Natural killer cell (primary cell): ENCODE measurements at regions of chr14 and their contacts with region 1.

Region 1: DNA sequence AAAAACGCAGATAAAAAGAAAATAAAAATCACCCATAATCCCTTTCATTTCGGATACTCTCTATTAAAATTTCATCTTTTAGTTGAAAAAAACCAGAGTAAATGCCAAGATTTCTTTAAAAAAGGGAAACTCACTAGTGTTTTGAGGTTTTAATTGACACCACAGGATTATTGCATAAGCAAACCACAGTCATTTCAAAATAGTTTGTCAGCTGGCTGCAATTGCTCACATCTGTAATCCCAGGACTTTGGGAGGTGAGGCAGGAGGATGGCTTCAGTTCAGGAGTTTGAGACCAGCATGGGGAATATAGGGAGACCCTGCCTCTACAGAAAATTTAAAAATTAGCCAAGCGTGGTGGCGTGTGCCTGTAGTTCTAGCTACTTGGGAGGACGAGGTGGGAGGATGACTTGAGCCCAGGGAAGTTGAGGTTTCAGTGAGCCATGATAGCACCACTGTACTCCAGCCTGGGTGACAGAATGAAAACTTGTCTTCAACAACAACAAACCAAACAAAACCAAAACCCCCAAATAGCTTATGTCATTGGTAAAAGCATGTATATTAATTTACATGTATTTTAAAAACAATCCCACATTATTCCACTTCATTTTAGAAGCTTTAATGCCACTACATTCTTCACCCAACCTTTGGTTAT is 48.8 kb downstream of the SYNE2 start:
- DNase-seq: peak; percentile 29 to 31
- ATAC-seq: peak; percentile 46 to 63 (median 55)
- H3K4me3 ChIP-seq: no peak overlapping the region
- H3K4me3 Mint-ChIP-seq: peak overlapping the region; percentile 68
- H3K27ac ChIP-seq: peak overlapping the region; percentile 45
- H3K27ac Mint-ChIP-seq: peak overlapping the region; percentile 67 to 97
- H3K4me1 ChIP-seq: peaks cover 30% of the 10 kb centered on the region
- H3K4me1 Mint-ChIP-seq: peaks cover 72 to 76% of the 10 kb centered on the region in 2 donors
- H3K27me3 ChIP-seq: no peaks in the 10 kb centered on the region
- H3K27me3 Mint-ChIP-seq: no peaks in the 10 kb centered on the region
- CTCF ChIP-seq: no peak

Region 2: GRCh38 chr14:63848890-63849289 is 52.7 kb before region 1 on chr14:
- intact Hi-C with region 1: no loop called
- DNase-seq: no peak
- ATAC-seq: no peak
- H3K4me3 ChIP-seq: no peak overlapping the region
- H3K4me3 Mint-ChIP-seq: no peak overlapping the region
- H3K27ac ChIP-seq: no peak overlapping the region
- H3K27ac Mint-ChIP-seq: no peak overlapping the region
- H3K4me1 ChIP-seq: peaks cover 9% of the 10 kb centered on the region
- H3K4me1 Mint-ChIP-seq: peaks cover 3% of the 10 kb centered on the region in 2 donors
- H3K27me3 ChIP-seq: no peaks in the 10 kb centered on the region
- H3K27me3 Mint-ChIP-seq: no peaks in the 10 kb centered on the region
- CTCF ChIP-seq: no peak

Region 3: GRCh38 chr14:63938198-63939005 is 36.8 kb after region 1 on chr14:
- intact Hi-C with region 1: loop called (anchors 5 kb)
- DNase-seq: peak in 1 of 2 donors; percentile 55
- ATAC-seq: peak in 2 of 3 donors; percentile 63 to 71
- H3K4me3 ChIP-seq: no peak overlapping the region
- H3K4me3 Mint-ChIP-seq: no peak overlapping the region
- H3K27ac ChIP-seq: peak overlapping the region; percentile 60
- H3K27ac Mint-ChIP-seq: no peak overlapping the region
- H3K4me1 ChIP-seq: peaks cover 29% of the 10 kb centered on the region
- H3K4me1 Mint-ChIP-seq: peaks cover 19 to 26% of the 10 kb centered on the region in 2 donors
- H3K27me3 ChIP-seq: no peaks in the 10 kb centered on the region
- H3K27me3 Mint-ChIP-seq: no peaks in the 10 kb centered on the region
- CTCF ChIP-seq: no peak